ENCODE measurements at regions of chr1 and their contacts with region 1.

Region 1: GRCh38 chr1:75785983-75786853 is at the start of gene RABGGTB:
- DNase-seq: peak; percentile 87 to 94 (median 91)
- ATAC-seq: peak; percentile 98
- H3K4me3 ChIP-seq: peak within 1 kb of the TSS; percentile 97
- H3K4me3 Mint-ChIP-seq: peak within 1 kb of the TSS; percentile 88 to 99 (median 97)
- H3K27ac ChIP-seq: peak within 1 kb of the TSS; percentile 83
- H3K27ac Mint-ChIP-seq: peak within 1 kb of the TSS; percentile 85 to 99 (median 97)
- H3K4me1 ChIP-seq: peaks cover 33 to 44% of the 10 kb centered on the region in 2 donors
- H3K4me1 Mint-ChIP-seq: peaks cover 44 to 62% (median 48%) of the 10 kb centered on the region in 7 donors
- H3K27me3 ChIP-seq: no peaks in the 10 kb centered on the region
- H3K27me3 Mint-ChIP-seq: peaks cover 0 to 7% (median 0%) of the 10 kb centered on the region in 5 donors
- total RNA-seq, gene RABGGTB: 89.7 to 140 (median 101) TPM

Region 2: DNA sequence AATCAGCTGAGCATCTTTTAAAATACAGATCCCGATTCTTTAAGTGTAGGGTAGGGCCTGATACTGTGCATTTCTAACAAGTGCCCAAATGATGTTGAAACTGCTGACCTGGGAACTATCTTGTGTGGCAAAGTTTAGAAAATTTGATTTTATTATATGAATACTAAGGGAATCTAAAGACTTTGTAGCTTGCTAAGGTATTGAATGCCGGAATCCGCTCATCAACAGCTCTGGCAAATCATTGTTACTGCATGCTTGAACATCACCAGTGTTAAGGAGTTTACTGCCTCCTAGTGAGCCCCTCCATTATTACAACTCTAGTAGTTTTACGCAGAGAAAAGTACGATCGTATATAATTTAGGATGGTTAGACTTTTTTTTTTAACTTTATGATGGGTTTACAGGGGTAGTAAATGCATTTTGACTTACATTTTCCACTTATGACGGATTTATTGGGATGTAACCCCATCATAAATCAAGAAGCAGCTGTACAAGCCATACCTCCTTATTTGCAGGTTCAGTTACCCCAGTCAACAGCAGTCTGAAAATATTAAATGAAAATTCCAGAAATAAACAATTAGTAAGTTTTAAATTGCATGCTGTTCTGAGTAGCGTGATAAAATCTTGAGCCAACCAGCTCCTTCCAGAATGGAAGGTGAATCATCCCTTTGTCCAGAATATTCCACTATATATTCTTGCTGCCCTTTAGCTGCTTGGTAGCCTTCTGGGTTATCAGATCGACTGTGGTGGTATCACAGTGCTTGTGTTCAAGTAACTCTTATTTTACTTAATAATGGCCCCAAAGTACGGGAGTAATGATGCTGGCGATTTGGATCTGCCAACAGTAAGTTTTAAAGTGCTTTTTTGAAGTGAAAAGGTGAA is 1052.4 kb before region 1 on chr1:
- CTCF ChIA-PET with region 1: no interaction called
- POLR2A ChIA-PET with region 1: no interaction called
- intact Hi-C with region 1: loop called in 1 of 2 experiments (anchors 1 kb)
- DNase-seq: peak in 7 of 9 donors; percentile 55 to 75 (median 67)
- ATAC-seq: peak; percentile 85
- H3K4me3 ChIP-seq: peak overlapping the region; percentile 93
- H3K4me3 Mint-ChIP-seq: peak overlapping the region; percentile 84 to 100 (median 98)
- H3K27ac ChIP-seq: peak overlapping the region; percentile 76
- H3K27ac Mint-ChIP-seq: peak overlapping the region; percentile 92 to 99 (median 95)
- H3K4me1 ChIP-seq: peaks cover 21 to 24% of the 10 kb centered on the region in 2 donors
- H3K4me1 Mint-ChIP-seq: peaks cover 22 to 64% (median 43%) of the 10 kb centered on the region in 7 donors
- H3K27me3 ChIP-seq: no peaks in the 10 kb centered on the region
- H3K27me3 Mint-ChIP-seq: no peaks in the 10 kb centered on the region

Region 3: GRCh38 chr1:75724472-75725022 is 61.7 kb before region 1 on chr1 and contains the start of gene ACADM:
- CTCF ChIA-PET with region 1: no interaction called
- POLR2A ChIA-PET with region 1: interaction called, 4 read pairs
- intact Hi-C with region 1: loop called (anchors 1 kb)
- DNase-seq: peak; percentile 68 to 93 (median 79)
- ATAC-seq: peak; percentile 98
- H3K4me3 ChIP-seq: peak within 1 kb of the TSS; percentile 92
- H3K4me3 Mint-ChIP-seq: peak within 1 kb of the TSS; percentile 94 to 100 (median 98)
- H3K27ac ChIP-seq: peak within 1 kb of the TSS; percentile 89
- H3K27ac Mint-ChIP-seq: peak within 1 kb of the TSS; percentile 92 to 99 (median 97)
- H3K4me1 ChIP-seq: peaks cover 5 to 12% of the 10 kb centered on the region in 2 donors
- H3K4me1 Mint-ChIP-seq: peaks cover 29 to 75% (median 64%) of the 10 kb centered on the region in 7 donors
- H3K27me3 ChIP-seq: no peaks in the 10 kb centered on the region
- H3K27me3 Mint-ChIP-seq: peaks cover 0 to 2% (median 0%) of the 10 kb centered on the region in 5 donors
- total RNA-seq, gene ACADM: 11.1 to 36.4 (median 32.9) TPM

Region 4: DNA sequence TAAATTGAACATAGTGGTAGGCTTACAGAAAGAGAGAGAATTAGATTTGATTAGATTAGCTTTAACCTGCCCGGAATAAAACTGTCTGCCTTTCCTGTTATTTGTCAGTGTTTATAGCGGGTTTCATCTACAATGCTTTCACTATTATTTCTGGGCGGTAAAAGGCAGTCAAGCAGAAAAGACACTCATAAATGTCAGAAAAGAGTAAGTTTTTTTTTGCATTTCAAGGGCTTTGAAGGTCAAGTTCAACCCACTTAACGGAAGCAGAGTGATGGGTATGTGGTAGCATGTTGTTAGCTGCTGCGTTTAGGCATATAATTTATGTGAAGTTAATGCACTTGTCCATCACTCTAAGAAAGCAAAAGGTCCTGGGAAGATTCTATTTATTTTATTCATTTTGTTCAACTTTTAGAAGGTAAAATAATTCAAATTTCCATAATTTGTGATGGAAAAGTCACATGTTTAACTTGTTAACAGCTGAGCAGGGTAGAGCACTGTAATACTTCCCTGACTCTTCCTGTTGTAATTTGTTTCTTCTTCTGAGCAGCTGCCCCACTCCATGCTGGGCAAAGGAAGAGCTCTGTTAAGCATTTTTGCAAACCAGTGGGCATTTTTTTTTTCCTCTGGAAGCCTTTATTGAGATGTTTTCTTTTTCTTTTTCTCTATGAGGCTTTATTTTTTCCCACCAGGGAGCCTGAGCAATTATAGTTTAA is 508.4 kb after region 1 on chr1:
- CTCF ChIA-PET with region 1: no interaction called
- POLR2A ChIA-PET with region 1: no interaction called
- intact Hi-C with region 1: loop called (anchors 10 kb)
- DNase-seq: peak in 5 of 9 donors; percentile 21 to 59 (median 49)
- ATAC-seq: peak; percentile 62
- H3K4me3 ChIP-seq: peak overlapping the region; percentile 7
- H3K4me3 Mint-ChIP-seq: peak overlapping the region; percentile 27 to 83 (median 69)
- H3K27ac ChIP-seq: peak overlapping the region; percentile 41
- H3K27ac Mint-ChIP-seq: peak overlapping the region; percentile 63 to 88 (median 81)
- H3K4me1 ChIP-seq: peaks cover 41 to 63% of the 10 kb centered on the region in 2 donors
- H3K4me1 Mint-ChIP-seq: peaks cover 21 to 93% (median 77%) of the 10 kb centered on the region in 7 donors
- H3K27me3 ChIP-seq: no peaks in the 10 kb centered on the region
- H3K27me3 Mint-ChIP-seq: peaks cover 0 to 2% (median 0%) of the 10 kb centered on the region in 5 donors

Region 5: DNA sequence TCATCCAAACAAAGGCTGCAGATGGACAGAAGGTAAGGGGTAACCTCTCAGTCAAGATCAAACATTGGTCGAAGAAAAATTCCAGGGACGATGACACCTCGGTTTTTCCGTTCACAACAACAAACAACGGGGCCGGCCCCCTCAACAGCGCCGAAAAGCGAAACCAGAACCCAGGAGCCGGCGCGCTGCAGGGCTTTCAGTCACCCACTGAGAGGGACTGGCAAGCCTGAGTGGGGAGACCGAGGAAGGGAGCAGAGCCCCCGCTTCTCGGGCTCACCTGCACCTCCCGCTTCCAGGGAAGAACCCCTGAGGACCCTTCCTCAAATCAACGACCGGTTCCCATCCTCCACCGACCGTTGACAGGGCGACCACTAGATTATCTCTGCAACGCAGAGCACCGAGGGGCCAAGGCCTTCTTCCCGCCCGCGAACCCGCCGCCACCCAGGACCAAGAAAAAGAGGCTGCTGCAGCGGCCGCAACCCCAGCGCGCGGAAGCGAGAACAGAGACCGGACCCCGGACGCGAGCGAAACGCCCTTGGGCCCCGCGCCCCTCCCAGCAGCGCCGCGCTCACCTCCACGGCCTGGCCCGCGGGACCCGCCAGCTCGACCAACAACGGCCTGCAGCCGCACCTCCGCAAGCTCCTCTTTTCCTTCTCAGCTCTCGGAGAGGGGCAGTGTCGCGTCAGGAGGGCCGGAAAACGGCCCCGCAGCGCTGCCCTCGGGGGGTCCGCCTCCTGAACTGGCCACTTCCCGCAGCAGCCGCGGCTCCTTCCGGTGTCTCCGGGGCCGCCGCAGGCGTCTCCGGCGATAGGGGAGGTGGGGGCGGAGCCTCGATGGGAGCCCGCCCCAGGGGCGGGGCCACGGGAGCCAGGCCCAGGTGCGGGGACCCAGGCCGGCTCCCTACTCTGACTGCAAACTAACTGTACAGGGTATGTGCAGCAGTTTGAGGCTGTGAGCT is 1973.1 kb after region 1 on chr1 and contains the start of gene USP33:
- CTCF ChIA-PET with region 1: no interaction called
- POLR2A ChIA-PET with region 1: no interaction called
- intact Hi-C with region 1: loop called in 1 of 2 experiments (anchors 5 kb)
- DNase-seq: peak; percentile 87 to 98 (median 92)
- ATAC-seq: peak; percentile 98
- H3K4me3 ChIP-seq: peak within 1 kb of the TSS; percentile 61
- H3K4me3 Mint-ChIP-seq: peak within 1 kb of the TSS; percentile 93 to 98 (median 96)
- H3K27ac ChIP-seq: peak within 1 kb of the TSS; percentile 86
- H3K27ac Mint-ChIP-seq: peak within 1 kb of the TSS; percentile 84 to 97 (median 94)
- H3K4me1 ChIP-seq: peaks cover 24 to 25% of the 10 kb centered on the region in 2 donors
- H3K4me1 Mint-ChIP-seq: peaks cover 28 to 64% (median 43%) of the 10 kb centered on the region in 7 donors
- H3K27me3 ChIP-seq: no peaks in the 10 kb centered on the region
- H3K27me3 Mint-ChIP-seq: peaks cover 0 to 10% (median 0%) of the 10 kb centered on the region in 5 donors
- total RNA-seq, gene USP33: 54.0 to 101 (median 86.4) TPM

Measured in naive thymus-derived CD4-positive, alpha-beta T cell (primary cell).